ENCODE measurements at regions of chr5 and their contacts with region 1.

Region 1: DNA sequence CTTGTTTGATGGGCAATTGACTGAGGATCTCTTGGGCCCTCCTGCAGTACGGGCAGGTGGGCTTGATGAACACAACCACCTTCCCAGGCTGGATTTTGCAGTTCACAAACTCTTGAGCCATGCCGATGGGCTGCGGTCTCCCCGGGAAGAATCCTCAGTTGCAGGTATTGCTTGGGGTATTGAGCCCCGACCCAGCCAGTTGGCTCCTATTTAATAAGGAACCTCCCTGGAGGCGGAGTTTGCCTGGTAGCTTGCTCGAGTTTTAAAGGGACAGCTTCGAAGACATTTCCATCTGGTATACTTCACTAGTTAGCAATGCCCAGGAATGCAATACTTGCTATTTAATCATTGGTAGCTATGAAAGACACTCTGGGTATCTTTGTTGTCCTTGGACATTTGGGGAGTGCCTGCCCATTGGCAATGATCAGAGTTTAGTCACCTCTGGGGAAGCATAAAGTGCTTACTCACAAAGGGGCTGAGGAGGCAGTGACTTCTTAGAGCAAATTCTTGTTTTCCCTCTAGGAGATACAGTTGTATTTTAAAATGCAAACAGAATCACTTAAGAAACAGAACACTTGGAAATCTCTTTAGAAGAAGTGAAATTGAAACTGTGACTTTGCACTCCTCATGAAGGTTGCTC is at the start of gene GLRX:
- DNase-seq: peak in 9 of 10 donors; percentile 26 to 75 (median 56)
- ATAC-seq: peak; percentile 36 to 49
- H3K4me3 Mint-ChIP-seq: peak within 1 kb of the TSS; percentile 89 to 99 (median 98)
- H3K27ac Mint-ChIP-seq: peak within 1 kb of the TSS; percentile 79 to 97 (median 95)
- H3K4me1 Mint-ChIP-seq: peaks cover 40 to 78% (median 68%) of the 10 kb centered on the region in 4 donors
- H3K27me3 Mint-ChIP-seq: no peaks in the 10 kb centered on the region
- polyA plus RNA-seq, gene GLRX: 133 to 232 (median 148) TPM

Region 2: GRCh38 chr5:95718203-95718602 is 104.5 kb before region 1 on chr5:
- POLR2A ChIA-PET with region 1: no interaction called
- DNase-seq: peak in 2 of 10 donors; percentile 10 to 14
- ATAC-seq: peak; percentile 56 to 84
- H3K4me3 Mint-ChIP-seq: no peak overlapping the region
- H3K27ac Mint-ChIP-seq: no peak overlapping the region
- H3K4me1 Mint-ChIP-seq: peaks cover 0 to 4% (median under 1%) of the 10 kb centered on the region in 4 donors
- H3K27me3 Mint-ChIP-seq: peaks cover 0 to 3% (median 0%) of the 10 kb centered on the region in 5 donors

Region 3: DNA sequence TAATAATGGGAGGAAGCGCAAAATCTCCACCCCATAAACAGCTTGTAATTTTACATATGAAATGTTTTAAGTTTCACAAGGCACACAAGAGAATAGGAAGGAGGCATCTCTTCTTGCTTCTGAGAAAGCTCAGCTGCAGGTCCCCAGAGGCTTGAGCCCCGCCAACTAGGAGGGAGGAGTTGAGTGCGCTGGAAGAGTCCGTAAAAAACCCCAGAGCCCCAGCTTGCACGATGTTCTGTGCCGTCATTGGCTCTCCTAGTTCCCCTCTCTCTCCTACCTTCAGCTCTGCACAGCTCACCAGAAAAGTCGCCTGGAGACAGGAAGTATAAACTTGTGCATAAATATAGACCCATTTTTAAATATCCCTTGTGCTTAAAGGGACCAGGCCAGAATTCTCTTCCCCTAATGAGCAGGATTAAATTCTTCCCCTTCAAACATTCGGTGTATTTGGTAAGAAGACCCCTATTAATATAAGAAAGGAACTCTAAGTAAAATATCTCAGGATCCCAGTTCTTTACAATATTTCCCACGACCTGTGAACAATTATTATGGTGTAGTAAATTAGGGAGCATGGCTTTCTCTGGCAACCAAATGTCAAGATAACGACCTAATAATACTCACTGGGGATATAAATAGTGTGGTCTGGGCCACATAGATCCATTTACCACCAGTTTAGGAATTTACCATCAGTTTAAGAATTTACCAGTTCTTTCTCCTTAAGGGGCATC is 13.8 kb before region 1 on chr5:
- POLR2A ChIA-PET with region 1: interaction called, 190 read pairs
- DNase-seq: peak; percentile 63 to 93 (median 82)
- ATAC-seq: peak; percentile 98 to 99
- H3K4me3 Mint-ChIP-seq: peak overlapping the region; percentile 34 to 87 (median 76)
- H3K27ac Mint-ChIP-seq: peak overlapping the region; percentile 85 to 97 (median 93)
- H3K4me1 Mint-ChIP-seq: peaks cover 42 to 63% (median 62%) of the 10 kb centered on the region in 4 donors
- H3K27me3 Mint-ChIP-seq: no peaks in the 10 kb centered on the region

Region 4: DNA sequence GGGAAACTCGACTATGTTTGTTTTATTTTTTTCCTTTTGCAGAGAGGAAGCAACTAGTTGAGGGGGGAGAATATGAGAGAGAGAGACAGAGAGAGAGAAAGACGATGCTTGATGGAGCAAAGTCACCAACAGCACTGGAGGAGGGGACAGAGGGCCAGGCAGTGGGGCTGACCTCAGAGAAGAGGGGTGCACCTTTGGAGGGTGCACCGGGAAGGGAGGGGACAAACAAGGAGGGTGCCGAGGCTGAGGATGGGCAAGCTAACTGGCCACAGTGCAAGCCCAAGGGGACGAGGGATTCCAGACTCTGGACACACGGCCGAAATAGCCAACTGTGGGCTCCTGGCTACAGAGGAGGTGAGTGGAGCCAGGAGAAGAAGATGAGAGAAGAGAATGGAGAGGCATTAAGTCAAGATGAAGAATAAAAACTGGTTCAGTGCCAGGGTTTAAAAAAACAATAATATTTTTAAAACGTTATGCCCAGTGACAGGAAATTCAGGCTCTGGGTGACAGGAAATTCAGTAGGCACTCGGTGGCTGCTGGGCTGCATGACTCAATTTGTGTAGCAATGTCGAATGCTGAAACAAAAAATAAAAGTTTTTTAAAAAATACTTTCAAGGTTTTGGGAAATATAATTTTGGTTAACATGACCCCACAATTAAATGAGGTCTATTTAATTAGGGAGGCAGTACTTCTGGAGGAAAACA is 13.2 kb after region 1 on chr5:
- POLR2A ChIA-PET with region 1: interaction called, 250 read pairs
- DNase-seq: peak in 3 of 10 donors; percentile 31 to 35 (median 32)
- ATAC-seq: peak; percentile 19 to 36
- H3K4me3 Mint-ChIP-seq: peak overlapping the region; percentile 86 to 96 (median 91)
- H3K27ac Mint-ChIP-seq: peak overlapping the region; percentile 87 to 98 (median 95)
- H3K4me1 Mint-ChIP-seq: peaks cover 33 to 67% (median 63%) of the 10 kb centered on the region in 4 donors
- H3K27me3 Mint-ChIP-seq: no peaks in the 10 kb centered on the region

Region 5: DNA sequence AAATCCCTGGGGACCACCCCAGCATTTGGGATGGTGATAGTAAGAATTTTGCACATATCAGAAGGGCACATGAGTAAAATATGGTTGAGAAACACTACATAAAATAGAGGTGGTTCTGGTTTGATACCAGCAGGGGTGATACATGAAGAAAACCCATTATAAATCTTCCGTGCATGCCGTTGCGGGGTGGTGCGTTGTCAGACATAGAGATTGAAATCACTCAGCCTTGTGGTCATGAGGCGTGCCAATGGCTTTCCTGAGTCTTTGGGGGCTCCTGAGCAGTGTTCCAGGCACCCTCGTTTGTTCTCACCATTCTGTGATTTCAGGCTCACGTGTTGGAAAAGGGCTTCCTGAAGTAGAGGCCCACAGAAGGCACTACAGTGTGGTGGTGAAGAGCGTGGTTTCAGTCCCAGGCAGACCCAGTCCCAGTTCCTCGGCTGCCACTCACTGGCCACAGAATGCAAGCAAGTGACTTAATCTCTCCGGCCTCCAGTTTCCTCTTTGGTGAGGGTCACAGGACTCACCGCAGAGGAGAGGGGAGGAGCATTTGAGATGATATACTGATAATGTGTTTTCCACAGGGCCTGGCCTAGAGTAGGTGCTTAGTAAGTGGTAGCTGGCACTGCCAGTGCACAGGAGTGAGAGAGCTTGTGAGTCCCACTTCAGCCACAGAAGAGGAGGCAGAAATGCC is 20.3 kb after region 1 on chr5:
- POLR2A ChIA-PET with region 1: interaction called, 250 read pairs
- DNase-seq: peak in 8 of 10 donors; percentile 23 to 76 (median 38)
- ATAC-seq: peak; percentile 82 to 87
- H3K4me3 Mint-ChIP-seq: peak overlapping the region; percentile 16 to 70 (median 59)
- H3K27ac Mint-ChIP-seq: peak overlapping the region; percentile 80 to 94 (median 90)
- H3K4me1 Mint-ChIP-seq: peaks cover 11 to 38% (median 27%) of the 10 kb centered on the region in 4 donors
- H3K27me3 Mint-ChIP-seq: no peaks in the 10 kb centered on the region

Measured in naive thymus-derived CD8-positive, alpha-beta T cell (primary cell).